Endothelial cell of umbilical vein (primary cell): ENCODE measurements at regions of chr1 and their contacts with region 1.

Region 1: DNA sequence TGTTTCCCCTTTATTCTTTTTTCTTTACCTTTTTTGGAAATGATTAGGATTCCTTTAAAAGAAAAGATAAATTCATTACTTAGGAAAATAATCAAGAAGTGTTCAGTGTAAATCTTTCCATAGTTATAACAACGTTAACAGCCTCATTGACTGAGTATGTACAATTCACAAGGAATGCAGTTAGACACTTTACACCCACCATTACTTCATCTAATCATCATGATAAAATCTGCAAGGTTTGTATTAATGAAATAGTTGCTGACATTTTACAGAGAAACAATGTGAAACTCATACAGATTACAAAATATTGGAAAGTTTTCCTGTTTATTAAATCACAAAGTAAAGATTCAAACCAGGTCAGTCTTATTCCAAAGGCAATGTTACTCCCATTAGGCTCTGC is 59.3 kb upstream of the NEGR1 start:
- DNase-seq: no peak
- H3K4me3 ChIP-seq: no peak overlapping the region
- H3K27ac ChIP-seq: no peak overlapping the region
- H3K4me1 ChIP-seq: no peaks in the 10 kb centered on the region
- H3K27me3 ChIP-seq: no peaks in the 10 kb centered on the region
- CTCF ChIP-seq: no peak
- POLR2A ChIP-seq: no peak

Region 2: DNA sequence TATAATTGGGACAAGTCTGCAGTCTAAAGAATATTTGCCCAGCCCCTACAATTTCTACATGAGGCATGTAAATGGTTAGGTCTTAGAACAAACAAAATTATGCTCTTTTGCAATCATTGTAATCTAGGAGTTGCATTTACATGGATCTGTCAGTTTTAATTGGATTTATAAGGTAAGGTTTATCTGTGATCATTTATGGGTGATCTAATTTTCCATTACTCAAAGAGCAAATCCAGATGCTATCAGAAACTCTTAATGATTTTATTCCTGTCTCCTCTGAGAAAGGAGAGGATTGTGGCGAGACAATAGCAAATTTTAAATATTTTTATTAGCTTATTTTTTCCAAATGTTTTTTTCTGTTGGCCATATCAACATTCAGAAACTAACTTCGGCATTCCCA is 45.2 kb before region 1 on chr1:
- CTCF ChIA-PET with region 1: interaction called, 27 read pairs
- POLR2A ChIA-PET with region 1: no interaction called
- dilution Hi-C with region 1: no loop called
- intact Hi-C with region 1: no loop called
- DNase-seq: no peak
- H3K4me3 ChIP-seq: no peak overlapping the region
- H3K27ac ChIP-seq: no peak overlapping the region
- H3K4me1 ChIP-seq: no peaks in the 10 kb centered on the region
- H3K27me3 ChIP-seq: no peaks in the 10 kb centered on the region
- CTCF ChIP-seq: no peak
- POLR2A ChIP-seq: no peak

Region 3: GRCh38 chr1:72547412-72547811 is 205.8 kb after region 1 on chr1:
- CTCF ChIA-PET with region 1: no interaction called
- POLR2A ChIA-PET with region 1: no interaction called
- dilution Hi-C with region 1: no loop called
- intact Hi-C with region 1: no loop called
- DNase-seq: no peak
- H3K4me3 ChIP-seq: no peak overlapping the region
- H3K27ac ChIP-seq: no peak overlapping the region
- H3K4me1 ChIP-seq: no peaks in the 10 kb centered on the region
- H3K27me3 ChIP-seq: no peaks in the 10 kb centered on the region
- CTCF ChIP-seq: no peak
- POLR2A ChIP-seq: no peak

Region 4: GRCh38 chr1:72616686-72617085 is 275.0 kb after region 1 on chr1:
- CTCF ChIA-PET with region 1: no interaction called
- POLR2A ChIA-PET with region 1: no interaction called
- dilution Hi-C with region 1: no loop called
- intact Hi-C with region 1: no loop called
- DNase-seq: no peak
- H3K4me3 ChIP-seq: no peak overlapping the region
- H3K27ac ChIP-seq: no peak overlapping the region
- H3K4me1 ChIP-seq: peaks cover 10% of the 10 kb centered on the region
- H3K27me3 ChIP-seq: no peaks in the 10 kb centered on the region
- CTCF ChIP-seq: no peak
- POLR2A ChIP-seq: no peak